Calu3 (cell line): ENCODE measurements at regions of chr6 and their contacts with region 1.

Region 1: GRCh38 chr6:169970306-169970988 is 219.0 kb downstream of the ERMARD start:
- DNase-seq: no peak
- H3K4me3 Mint-ChIP-seq: no peak overlapping the region
- H3K27ac Mint-ChIP-seq: no peak overlapping the region
- H3K4me1 Mint-ChIP-seq: no peaks in the 10 kb centered on the region
- H3K27me3 Mint-ChIP-seq: peaks cover 68% of the 10 kb centered on the region
- CTCF ChIP-seq: no peak

Region 2: DNA sequence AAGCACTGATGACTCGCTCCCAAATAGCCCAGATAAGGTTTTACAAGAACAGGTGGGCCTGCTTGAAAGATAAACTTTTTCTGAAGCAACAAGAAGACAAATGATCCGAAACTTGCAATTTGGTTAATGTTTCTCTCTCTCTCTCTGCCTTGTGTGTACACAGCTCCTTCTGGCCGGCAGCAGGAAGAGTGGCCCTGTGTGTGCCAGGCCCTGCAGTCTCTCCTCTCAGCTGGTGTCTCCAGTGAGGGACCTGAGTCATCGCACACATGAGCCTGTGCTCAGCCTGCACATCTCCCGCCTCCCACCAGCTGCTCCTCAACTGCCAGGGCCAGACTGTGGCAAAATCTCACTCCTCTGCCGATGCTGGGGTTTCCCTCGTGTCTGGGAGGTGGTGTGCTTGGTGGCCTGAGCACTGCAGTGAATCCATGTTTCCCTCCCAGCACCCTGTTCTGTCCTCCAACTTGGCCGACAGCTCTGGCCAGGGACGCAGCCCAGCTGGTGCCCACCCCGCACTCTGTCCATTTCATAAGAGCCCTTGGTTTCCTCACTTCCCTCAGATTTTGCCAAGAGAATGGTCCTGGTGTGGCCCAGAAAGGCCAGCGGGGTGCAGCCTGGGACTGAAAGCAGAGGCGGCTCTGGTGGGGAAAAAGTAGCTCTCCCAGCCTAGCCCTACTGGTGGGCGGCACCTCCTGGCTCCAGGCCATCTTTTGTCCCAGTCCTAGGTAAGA is 169.6 kb before region 1 on chr6:
- CTCF ChIA-PET with region 1: no interaction called
- intact Hi-C with region 1: no loop called
- DNase-seq: peak; percentile 62
- H3K4me3 Mint-ChIP-seq: no peak overlapping the region
- H3K27ac Mint-ChIP-seq: no peak overlapping the region
- H3K4me1 Mint-ChIP-seq: peaks cover 6% of the 10 kb centered on the region
- H3K27me3 Mint-ChIP-seq: peaks cover 45% of the 10 kb centered on the region
- CTCF ChIP-seq: no peak

Region 3: GRCh38 chr6:170243791-170244291 is 273.4 kb after region 1 on chr6:
- CTCF ChIA-PET with region 1: no interaction called
- intact Hi-C with region 1: no loop called
- DNase-seq: no peak
- H3K4me3 Mint-ChIP-seq: no peak overlapping the region
- H3K27ac Mint-ChIP-seq: no peak overlapping the region
- H3K4me1 Mint-ChIP-seq: no peaks in the 10 kb centered on the region
- H3K27me3 Mint-ChIP-seq: peaks cover 35% of the 10 kb centered on the region
- CTCF ChIP-seq: no peak

Region 4: DNA sequence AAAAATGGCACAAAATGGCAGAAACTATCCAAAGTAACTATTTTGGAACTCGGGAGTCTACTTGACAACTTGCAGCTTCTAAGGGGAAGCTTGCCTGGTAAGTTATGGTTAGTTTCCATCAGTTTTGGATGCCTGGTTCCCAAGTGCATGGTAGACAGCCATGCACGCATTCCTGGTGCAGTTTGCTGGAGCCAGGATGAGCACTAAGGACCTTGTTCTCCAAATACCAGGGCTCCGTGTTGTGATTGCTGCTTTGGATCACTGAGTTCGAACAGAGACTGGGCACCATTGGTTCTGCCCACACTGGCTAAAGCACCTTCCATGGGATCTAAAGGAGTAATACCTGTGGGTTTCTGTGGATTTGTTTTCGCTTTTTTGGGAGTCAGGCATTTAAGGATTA is 439.8 kb after region 1 on chr6:
- CTCF ChIA-PET with region 1: no interaction called
- intact Hi-C with region 1: loop called (anchors 5 kb)
- DNase-seq: no peak
- H3K4me3 Mint-ChIP-seq: no peak overlapping the region
- H3K27ac Mint-ChIP-seq: no peak overlapping the region
- H3K4me1 Mint-ChIP-seq: no peaks in the 10 kb centered on the region
- H3K27me3 Mint-ChIP-seq: peaks cover 20% of the 10 kb centered on the region
- CTCF ChIP-seq: no peak